ENCODE measurements at regions of chr17 and their contacts with region 1.

Region 1: GRCh38 chr17:34542700-34543336 is 36.6 kb upstream of the TMEM132E start:
- DNase-seq: peak in 1 of 2 experiments; percentile 89
- H3K4me3 ChIP-seq: no peak overlapping the region
- H3K27ac ChIP-seq: no peak overlapping the region
- H3K4me1 ChIP-seq: peaks cover 0 to 4% (median 3%) of the 10 kb centered on the region in 4 experiments; a peak in 2 of 7 replicates
- H3K27me3 ChIP-seq: peaks cover 0 to 5% (median 2%) of the 10 kb centered on the region in 4 experiments; a peak in 1 of 7 replicates
- CTCF ChIP-seq: peak; percentile 63 to 85 (median 80)
- EP300 ChIP-seq: no peak
- POLR2A ChIP-seq: no peak
- RAD21 ChIP-seq: peak; percentile 91 to 93

Region 2: DNA sequence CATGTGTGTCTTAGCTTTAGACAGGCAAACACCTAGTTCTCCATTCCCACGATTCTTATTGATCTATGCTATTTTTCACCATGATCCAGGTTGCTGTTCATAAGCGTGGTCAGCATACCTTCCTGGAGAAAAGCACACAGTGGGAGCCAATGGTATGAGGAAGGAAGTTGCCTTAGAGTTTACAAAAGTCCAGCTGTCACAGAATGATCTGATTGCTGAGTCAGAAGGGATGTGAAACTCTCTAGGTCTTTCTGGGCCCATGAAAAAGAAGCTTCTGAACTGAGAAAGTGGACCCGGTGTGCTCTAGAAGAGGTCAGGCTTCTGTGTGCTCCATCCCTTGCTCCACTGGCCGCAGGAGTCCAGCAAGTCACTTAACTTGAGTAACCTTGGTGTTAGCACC is 108.8 kb before region 1 on chr17:
- CTCF ChIA-PET with region 1: no interaction called
- POLR2A ChIA-PET with region 1: no interaction called
- DNase-seq: no peak
- H3K4me3 ChIP-seq: no peak overlapping the region
- H3K27ac ChIP-seq: no peak overlapping the region
- H3K4me1 ChIP-seq: no peaks in the 10 kb centered on the region; a peak in 2 of 7 replicates
- H3K27me3 ChIP-seq: no peaks in the 10 kb centered on the region; a peak in 1 of 7 replicates
- CTCF ChIP-seq: no peak
- EP300 ChIP-seq: no peak
- POLR2A ChIP-seq: no peak
- RAD21 ChIP-seq: no peak

Region 3: DNA sequence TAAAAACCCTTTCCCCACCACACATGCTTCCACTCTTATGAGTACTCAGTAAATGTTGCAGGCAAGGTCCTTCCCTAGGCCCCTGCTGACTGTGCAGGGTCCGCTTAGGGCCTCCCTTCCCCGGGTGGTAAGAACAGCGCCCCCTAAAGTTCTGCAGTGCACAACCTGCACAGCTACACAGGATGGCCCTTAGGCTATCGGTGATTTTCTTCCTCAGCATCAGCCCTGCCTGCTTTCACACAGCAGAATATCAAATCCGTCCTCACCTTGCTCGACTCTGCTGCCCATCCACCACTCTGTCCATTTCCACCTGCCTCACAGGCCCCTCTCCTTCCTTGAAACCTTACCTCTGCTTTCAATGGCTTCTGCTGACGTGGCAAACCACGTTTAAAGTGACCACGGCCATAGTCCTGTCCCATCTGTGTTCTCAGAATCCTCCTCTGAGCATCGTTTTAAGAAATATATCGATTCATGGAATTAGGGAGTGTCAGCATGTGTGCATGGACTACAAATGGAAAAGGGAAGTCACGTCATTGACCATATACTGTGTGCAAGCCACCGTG is 14.8 kb before region 1 on chr17:
- CTCF ChIA-PET with region 1: interaction called, 46 read pairs
- POLR2A ChIA-PET with region 1: no interaction called
- DNase-seq: peak in 1 of 2 experiments; percentile 67
- H3K4me3 ChIP-seq: no peak overlapping the region
- H3K27ac ChIP-seq: no peak overlapping the region
- H3K4me1 ChIP-seq: peaks cover 0 to 3% (median 0%) of the 10 kb centered on the region in 4 experiments; a peak in 1 of 7 replicates
- H3K27me3 ChIP-seq: no peaks in the 10 kb centered on the region; a peak in 1 of 7 replicates
- CTCF ChIP-seq: peak; percentile 71 to 81 (median 74)
- EP300 ChIP-seq: no peak
- POLR2A ChIP-seq: no peak
- RAD21 ChIP-seq: peak; percentile 47 to 60; a peak in 3 of 4 replicates

Region 4: DNA sequence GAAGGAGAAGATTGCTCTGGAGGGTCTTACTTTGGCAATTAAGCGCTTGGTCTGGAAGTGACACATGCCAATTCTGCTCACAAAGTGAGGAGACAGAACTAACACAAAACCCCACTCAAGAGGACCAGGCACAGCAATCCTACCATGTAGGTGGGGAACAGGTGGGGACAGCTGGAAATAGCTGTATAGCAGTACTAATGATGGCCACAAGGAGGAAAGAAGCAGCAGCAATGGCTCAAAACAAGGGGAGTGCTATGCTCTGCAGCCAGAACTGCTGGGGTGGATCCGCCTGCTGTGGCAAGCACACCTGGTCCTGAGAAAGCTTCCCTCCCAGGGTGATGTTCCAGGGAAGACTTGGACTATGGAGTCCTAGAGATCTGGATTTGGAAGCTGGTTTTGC is 19.6 kb after region 1 on chr17:
- CTCF ChIA-PET with region 1: interaction called, 102 read pairs
- POLR2A ChIA-PET with region 1: no interaction called
- DNase-seq: no peak
- H3K4me3 ChIP-seq: no peak overlapping the region
- H3K27ac ChIP-seq: no peak overlapping the region
- H3K4me1 ChIP-seq: no peaks in the 10 kb centered on the region; a peak in 1 of 7 replicates
- H3K27me3 ChIP-seq: peaks cover 0 to 10% (median 0%) of the 10 kb centered on the region in 4 experiments; a peak in 2 of 7 replicates
- CTCF ChIP-seq: peak; percentile 39 to 82 (median 66)
- EP300 ChIP-seq: no peak
- POLR2A ChIP-seq: no peak
- RAD21 ChIP-seq: peak; percentile 71 to 73

Region 5: GRCh38 chr17:34584805-34585416 is 42.1 kb after region 1 on chr17:
- CTCF ChIA-PET with region 1: interaction called, 10 read pairs
- POLR2A ChIA-PET with region 1: no interaction called
- DNase-seq: no peak
- H3K4me3 ChIP-seq: no peak overlapping the region
- H3K27ac ChIP-seq: no peak overlapping the region
- H3K4me1 ChIP-seq: peaks cover 0 to 22% (median 11%) of the 10 kb centered on the region in 4 experiments; a peak in 5 of 7 replicates
- H3K27me3 ChIP-seq: peaks cover 66 to 96% (median 90%) of the 10 kb centered on the region in 4 experiments
- CTCF ChIP-seq: peak in 2 of 3 experiments; percentile 27 to 49; a peak in 3 of 4 replicates
- EP300 ChIP-seq: no peak
- POLR2A ChIP-seq: no peak
- RAD21 ChIP-seq: peak; percentile 52 to 65

Region 6: GRCh38 chr17:34892461-34893249 is 349.8 kb after region 1 on chr17:
- CTCF ChIA-PET with region 1: interaction called, 67 read pairs
- POLR2A ChIA-PET with region 1: no interaction called
- DNase-seq: peak; percentile 21 to 77
- H3K4me3 ChIP-seq: no peak overlapping the region
- H3K27ac ChIP-seq: no peak overlapping the region
- H3K4me1 ChIP-seq: no peaks in the 10 kb centered on the region
- H3K27me3 ChIP-seq: no peaks in the 10 kb centered on the region; a peak in 1 of 7 replicates
- CTCF ChIP-seq: peak; percentile 90 to 95 (median 94)
- EP300 ChIP-seq: no peak
- POLR2A ChIP-seq: no peak
- RAD21 ChIP-seq: peak; percentile 98

Measured in H1 (cell line).